Dorsolateral prefrontal cortex (tissue), 120 donors: ENCODE measurements at regions of chr2 and their contacts with region 1.

Region 1: GRCh38 chr2:191020221-191020741 is 6.3 kb upstream of the STAT1 start:
- DNase-seq: peak; percentile 80 to 97 (median 86)
- H3K4me3 ChIP-seq: peak overlapping the region; percentile 54 to 99 (median 81)
- H3K27ac ChIP-seq: peak overlapping the region; percentile 63 to 98 (median 92)
- H3K27me3 ChIP-seq: no peaks in the 10 kb centered on the region
- CTCF ChIP-seq: peak in 52 of 56 donors; percentile 13 to 69 (median 45)

Region 2: GRCh38 chr2:190781604-190782198 is 238.6 kb before region 1 on chr2:
- intact Hi-C with region 1: loop called in 1 of 2 experiments (anchors 10 kb)
- DNase-seq: peak in 1 of 10 donors; percentile 36
- H3K4me3 ChIP-seq: no peak overlapping the region
- H3K27ac ChIP-seq: no peak overlapping the region
- H3K27me3 ChIP-seq: peaks cover 0 to 2% (median 0%) of the 10 kb centered on the region in 45 donors
- CTCF ChIP-seq: peak in 55 of 56 donors; percentile 45 to 81 (median 63)

Region 3: DNA sequence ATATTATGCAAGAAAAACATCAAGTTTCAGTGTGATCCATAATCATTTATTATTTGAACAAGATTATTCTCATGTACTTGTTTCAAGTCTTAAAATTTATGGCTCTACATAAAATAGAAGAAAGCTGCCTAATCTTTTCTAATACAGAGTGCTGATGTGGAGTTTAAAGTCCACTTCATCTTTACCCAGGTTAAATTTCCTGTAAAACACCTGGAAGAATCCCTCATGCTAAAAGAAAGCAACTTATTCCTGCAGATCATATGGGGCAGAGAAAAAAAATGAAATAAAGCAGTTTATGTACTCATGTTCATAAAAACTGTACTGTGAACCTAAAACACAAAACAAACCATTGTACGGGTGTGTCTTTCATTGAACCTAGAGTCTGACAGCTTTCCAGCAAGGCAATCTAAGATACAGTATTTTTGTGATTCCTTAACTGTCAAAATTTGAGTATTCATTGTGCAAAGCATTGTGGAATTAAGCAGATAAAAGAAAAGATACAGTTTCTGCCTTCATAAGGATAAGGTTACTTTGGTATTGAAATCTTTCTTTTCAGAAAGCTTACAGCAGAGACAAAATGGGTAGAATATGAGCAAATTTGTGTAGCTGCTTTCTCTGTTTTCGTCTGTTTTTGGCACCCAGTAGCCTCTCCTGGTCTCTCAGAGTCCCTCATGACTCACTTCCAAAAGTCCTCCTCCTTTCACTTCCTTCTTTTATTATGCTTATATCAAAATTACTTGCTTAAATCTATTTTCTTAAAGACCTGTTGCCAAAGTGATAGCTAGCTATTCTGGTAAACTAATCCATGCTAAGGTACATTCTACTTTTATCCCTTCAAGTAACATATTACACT is 166.5 kb before region 1 on chr2:
- intact Hi-C with region 1: loop called in 1 of 2 experiments (anchors 10 kb)
- DNase-seq: no peak
- H3K4me3 ChIP-seq: no peak overlapping the region
- H3K27ac ChIP-seq: peak overlapping the region in 1 of 59 donors; percentile 45
- H3K27me3 ChIP-seq: no peaks in the 10 kb centered on the region
- CTCF ChIP-seq: no peak

Region 4: DNA sequence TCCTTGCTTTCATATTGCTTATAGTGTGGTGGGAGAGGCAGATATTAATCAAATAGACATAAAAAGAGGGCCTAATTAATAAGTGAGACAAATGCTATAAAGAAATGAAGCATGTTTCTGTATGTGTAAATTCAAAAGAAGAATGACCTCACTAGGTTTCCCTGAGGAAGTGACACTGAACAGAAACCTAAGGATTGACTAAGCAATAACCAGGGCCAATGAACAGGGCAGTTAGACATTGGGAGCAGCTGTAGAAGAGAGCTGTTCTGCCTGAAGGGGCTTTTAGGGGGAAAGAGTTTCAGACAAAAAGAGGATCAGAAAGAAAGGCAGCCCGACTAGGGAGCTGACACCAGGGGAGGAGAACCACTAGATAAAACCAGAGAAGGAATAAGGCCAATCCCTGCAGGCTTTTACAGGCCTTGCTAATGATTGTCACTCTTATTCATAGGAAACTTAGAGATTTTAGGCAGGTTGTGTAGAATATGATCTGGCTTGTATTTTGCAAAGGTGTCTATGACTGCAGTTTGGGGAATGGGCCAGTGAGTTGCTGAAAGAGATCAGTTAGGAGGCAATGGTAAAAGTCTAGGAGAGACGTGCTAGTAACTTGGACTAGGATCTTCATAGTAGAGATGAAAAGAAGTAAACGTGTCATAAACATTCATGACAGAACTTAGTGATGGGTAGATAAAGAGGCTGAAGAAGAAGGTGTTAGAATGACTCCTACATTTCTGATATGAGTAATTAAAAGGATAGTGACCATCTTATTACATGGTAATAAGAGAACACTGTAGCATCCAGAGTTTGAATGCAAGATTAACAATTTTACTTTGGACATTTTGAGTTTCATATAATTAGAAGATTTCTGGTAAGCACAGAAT is 630.9 kb after region 1 on chr2:
- intact Hi-C with region 1: no loop called
- DNase-seq: no peak
- H3K4me3 ChIP-seq: no peak overlapping the region
- H3K27ac ChIP-seq: no peak overlapping the region
- H3K27me3 ChIP-seq: no peaks in the 10 kb centered on the region
- CTCF ChIP-seq: no peak